CD4-positive, alpha-beta T cell (primary cell): ENCODE measurements at regions of chr3 and their contacts with region 1.

Region 1: GRCh38 chr3:115814778-115815380 is 191.6 kb downstream of the GAP43 start:
- DNase-seq: peak; percentile 39 to 81 (median 60)
- ATAC-seq: peak; percentile 64
- H3K4me3 ChIP-seq: no peak overlapping the region
- H3K4me3 Mint-ChIP-seq: no peak overlapping the region
- H3K27ac ChIP-seq: no peak overlapping the region
- H3K27ac Mint-ChIP-seq: no peak overlapping the region
- H3K4me1 ChIP-seq: no peaks in the 10 kb centered on the region
- H3K4me1 Mint-ChIP-seq: no peaks in the 10 kb centered on the region
- H3K27me3 ChIP-seq: peaks cover 0 to 7% of the 10 kb centered on the region in 2 experiments
- H3K27me3 Mint-ChIP-seq: peaks cover 21% of the 10 kb centered on the region
- CTCF ChIP-seq: peak; percentile 95

Region 2: GRCh38 chr3:115092220-115092791 is 722.6 kb before region 1 on chr3:
- CTCF ChIA-PET with region 1: interaction called, 3 read pairs
- POLR2A ChIA-PET with region 1: no interaction called
- intact Hi-C with region 1: loop called in 1 of 2 experiments (anchors 1 kb)
- DNase-seq: peak; percentile 14 to 79 (median 56)
- ATAC-seq: peak; percentile 67
- H3K4me3 ChIP-seq: no peak overlapping the region
- H3K4me3 Mint-ChIP-seq: no peak overlapping the region
- H3K27ac ChIP-seq: no peak overlapping the region
- H3K27ac Mint-ChIP-seq: no peak overlapping the region
- H3K4me1 ChIP-seq: no peaks in the 10 kb centered on the region
- H3K4me1 Mint-ChIP-seq: peaks cover 68% of the 10 kb centered on the region
- H3K27me3 ChIP-seq: no peaks in the 10 kb centered on the region
- H3K27me3 Mint-ChIP-seq: no peaks in the 10 kb centered on the region
- CTCF ChIP-seq: peak; percentile 81